SK-N-SH (cell line): ENCODE measurements at regions of chr6 and their contacts with region 1.

Region 1: DNA sequence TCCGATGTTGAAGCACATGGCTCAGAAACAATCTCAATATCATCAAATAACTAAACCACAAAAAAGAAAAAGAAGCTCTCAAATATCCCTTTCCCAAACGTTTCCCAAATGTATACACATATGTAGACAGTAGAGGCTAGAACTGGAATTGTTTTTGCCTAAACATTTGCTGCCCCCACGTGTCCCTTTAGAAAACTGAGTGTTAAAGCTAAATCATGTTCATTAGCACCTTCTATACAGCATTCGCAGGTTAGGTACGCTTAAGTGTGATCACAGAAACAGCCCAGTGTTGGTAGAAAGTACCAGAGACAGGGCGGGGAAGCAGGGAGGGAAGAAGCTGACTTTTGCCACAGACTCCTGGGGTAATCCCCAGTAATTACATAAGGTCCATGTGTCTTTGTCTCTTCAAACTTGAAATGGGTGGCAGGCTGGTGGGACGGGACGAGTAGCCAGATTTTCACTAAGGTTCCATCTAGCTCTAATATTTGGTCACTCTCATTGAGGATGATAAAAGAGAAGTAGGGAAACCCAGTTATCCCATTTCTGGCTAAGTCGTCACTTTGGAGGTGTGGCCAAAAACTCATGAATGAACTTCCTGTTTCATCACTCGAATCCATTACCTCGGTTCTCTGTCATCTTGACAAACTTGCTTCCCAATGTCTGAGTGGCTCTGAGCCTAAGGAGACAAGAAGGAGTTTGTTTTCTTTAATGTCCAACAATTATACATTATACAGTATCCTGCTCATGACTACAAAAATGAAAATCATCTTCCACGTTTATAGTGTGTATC is 15.0 kb upstream of the TFAP2A start:
- DNase-seq: peak; percentile 31
- H3K4me3 ChIP-seq: peak overlapping the region; percentile 16 to 38; a peak in 2 of 4 replicates
- H3K27ac ChIP-seq: no peak overlapping the region
- H3K4me1 ChIP-seq: no peaks in the 10 kb centered on the region; a peak in 2 of 4 replicates
- H3K27me3 ChIP-seq: peaks cover 20% of the 10 kb centered on the region
- CTCF ChIP-seq: peak; percentile 72
- EP300 ChIP-seq: no peak
- RAD21 ChIP-seq: peak; percentile 73

Region 2: GRCh38 chr6:10256113-10256690 is 173.6 kb before region 1 on chr6:
- CTCF ChIA-PET with region 1: interaction called, 14 read pairs
- POLR2A ChIA-PET with region 1: no interaction called
- DNase-seq: peak; percentile 7
- H3K4me3 ChIP-seq: no peak overlapping the region
- H3K27ac ChIP-seq: no peak overlapping the region
- H3K4me1 ChIP-seq: no peaks in the 10 kb centered on the region
- H3K27me3 ChIP-seq: no peaks in the 10 kb centered on the region
- CTCF ChIP-seq: peak; percentile 68
- EP300 ChIP-seq: no peak
- RAD21 ChIP-seq: peak; percentile 31; the same call in 1 of the 2 replicates

Region 3: GRCh38 chr6:10414766-10415592 is 14.9 kb before region 1 on chr6 and contains the start of gene TFAP2A:
- CTCF ChIA-PET with region 1: interaction called, 11 read pairs
- POLR2A ChIA-PET with region 1: no interaction called
- DNase-seq: no peak
- H3K4me3 ChIP-seq: peak within 1 kb of the TSS in 1 of 2 experiments; percentile 32; a peak in 1 of 4 replicates
- H3K27ac ChIP-seq: no peak within 1 kb of the TSS
- H3K4me1 ChIP-seq: peaks cover 0 to 2% of the 10 kb centered on the region in 2 experiments; a peak in 2 of 4 replicates
- H3K27me3 ChIP-seq: peaks cover 94% of the 10 kb centered on the region
- CTCF ChIP-seq: peak; percentile 23
- EP300 ChIP-seq: no peak
- RAD21 ChIP-seq: no peak
- polyA plus RNA-seq, gene TFAP2A: 0.02 and 0.07 TPM in 2 replicates

Region 4: DNA sequence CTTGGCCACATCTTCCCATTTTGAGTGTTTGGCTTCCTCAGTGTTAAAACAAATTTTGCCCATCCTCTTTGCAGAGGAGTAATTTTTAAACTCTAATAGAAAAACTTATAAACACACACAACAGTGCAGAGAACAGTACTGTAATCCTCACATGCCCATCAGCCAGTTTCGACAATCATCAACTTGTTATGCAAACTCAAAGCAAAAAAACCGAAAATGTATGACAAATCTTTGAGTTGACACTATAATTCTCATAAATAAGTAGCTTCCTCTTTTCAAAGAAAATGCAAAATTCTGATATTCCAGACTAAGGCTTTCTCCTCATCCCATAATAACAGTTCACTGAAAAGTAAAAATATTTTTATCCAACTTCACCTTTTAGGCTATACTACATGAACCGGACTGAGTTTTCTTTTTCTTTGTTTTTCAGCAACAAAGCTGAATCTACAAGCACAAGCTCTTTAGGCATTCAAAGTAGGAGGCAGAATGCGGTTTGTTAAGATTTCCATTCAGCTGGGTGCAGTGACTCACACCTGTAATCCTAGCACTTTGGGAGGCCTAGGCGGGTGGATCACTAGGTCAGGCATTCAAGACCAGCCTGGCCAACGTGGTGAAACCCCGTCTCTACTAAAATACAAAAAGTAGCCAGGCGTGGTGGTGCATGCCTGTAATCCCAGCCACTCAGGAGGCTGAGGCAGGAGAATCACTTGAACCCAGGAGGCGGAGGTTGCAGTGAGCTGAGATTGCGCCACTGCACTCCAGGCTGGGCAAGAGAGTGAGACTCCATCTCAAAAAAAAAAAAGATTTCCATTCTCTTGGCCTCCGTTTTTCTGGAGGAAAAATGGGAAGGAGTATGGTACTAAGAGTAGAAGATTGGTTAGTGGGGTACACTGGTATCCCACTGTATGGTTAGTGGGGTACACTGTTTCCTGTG is 166.2 kb after region 1 on chr6:
- CTCF ChIA-PET with region 1: no interaction called
- POLR2A ChIA-PET with region 1: no interaction called
- DNase-seq: no peak
- H3K4me3 ChIP-seq: no peak overlapping the region
- H3K27ac ChIP-seq: no peak overlapping the region
- H3K4me1 ChIP-seq: peaks cover 0 to 5% of the 10 kb centered on the region in 2 experiments; a peak in 1 of 4 replicates
- H3K27me3 ChIP-seq: no peaks in the 10 kb centered on the region
- CTCF ChIP-seq: no peak
- EP300 ChIP-seq: no peak
- RAD21 ChIP-seq: no peak